ENCODE measurements at regions of chr16 and their contacts with region 1.

Region 1: GRCh38 chr16:11949527-11949926 is 7.7 kb upstream of the NPIPB2 start:
- DNase-seq: no peak
- ATAC-seq: peak; percentile 88

Region 2: GRCh38 chr16:12067714-12068401 is 118.3 kb after region 1 on chr16:
- intact Hi-C with region 1: loop called (anchors 5 kb)
- DNase-seq: peak; percentile 48
- ATAC-seq: peak; percentile 81

Measured in Right ventricle myocardium superior (tissue), 1 donor.